Activated T-helper 2 cell treated with anti-CD3 and anti-CD28 coated beads, Interferon-gamma antibody, Interleukin-2, Interleukin-4, amounts not matched to agents 10 μg/mL and 5 μg/mL and 100 μg/mL, durations not matched to agents 14 hours and 24 hours and 36 hours (primary cell): ENCODE measurements at regions of chr13 and their contacts with region 1.

Region 1: GRCh38 chr13:94327318-94327717 is 152.2 kb downstream of the DCT start:
- DNase-seq: no peak
- H3K4me3 Mint-ChIP-seq: peak overlapping the region; percentile 45
- H3K27ac Mint-ChIP-seq: no peak overlapping the region
- H3K4me1 Mint-ChIP-seq: peaks cover 52% of the 10 kb centered on the region
- H3K27me3 Mint-ChIP-seq: peaks cover 6% of the 10 kb centered on the region

Region 2: DNA sequence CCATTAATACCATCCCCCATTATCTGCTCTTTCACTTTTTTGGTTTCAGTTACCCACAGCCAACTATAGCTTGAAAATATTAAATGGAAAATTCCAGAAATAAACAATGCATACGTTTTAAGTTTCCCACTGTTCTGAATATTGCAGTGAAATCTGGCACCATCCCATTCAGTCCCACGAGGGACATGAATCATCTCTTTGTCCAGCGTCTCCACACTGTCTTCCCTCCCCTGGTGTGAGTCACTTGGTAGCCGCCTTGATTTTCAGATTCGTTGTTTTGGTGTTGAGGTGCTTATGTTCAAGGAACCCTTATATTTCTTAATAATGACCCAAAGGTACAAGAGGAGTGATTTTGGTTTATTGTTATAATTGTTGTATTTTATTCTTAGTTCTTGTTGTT is 93.9 kb before region 1 on chr13:
- intact Hi-C with region 1: loop called (anchors 10 kb)
- DNase-seq: no peak
- H3K4me3 Mint-ChIP-seq: no peak overlapping the region
- H3K27ac Mint-ChIP-seq: no peak overlapping the region
- H3K4me1 Mint-ChIP-seq: peaks cover 3% of the 10 kb centered on the region
- H3K27me3 Mint-ChIP-seq: no peaks in the 10 kb centered on the region